Natural killer cell (primary cell): ENCODE measurements at regions of chr1 and their contacts with region 1.

Region 1: DNA sequence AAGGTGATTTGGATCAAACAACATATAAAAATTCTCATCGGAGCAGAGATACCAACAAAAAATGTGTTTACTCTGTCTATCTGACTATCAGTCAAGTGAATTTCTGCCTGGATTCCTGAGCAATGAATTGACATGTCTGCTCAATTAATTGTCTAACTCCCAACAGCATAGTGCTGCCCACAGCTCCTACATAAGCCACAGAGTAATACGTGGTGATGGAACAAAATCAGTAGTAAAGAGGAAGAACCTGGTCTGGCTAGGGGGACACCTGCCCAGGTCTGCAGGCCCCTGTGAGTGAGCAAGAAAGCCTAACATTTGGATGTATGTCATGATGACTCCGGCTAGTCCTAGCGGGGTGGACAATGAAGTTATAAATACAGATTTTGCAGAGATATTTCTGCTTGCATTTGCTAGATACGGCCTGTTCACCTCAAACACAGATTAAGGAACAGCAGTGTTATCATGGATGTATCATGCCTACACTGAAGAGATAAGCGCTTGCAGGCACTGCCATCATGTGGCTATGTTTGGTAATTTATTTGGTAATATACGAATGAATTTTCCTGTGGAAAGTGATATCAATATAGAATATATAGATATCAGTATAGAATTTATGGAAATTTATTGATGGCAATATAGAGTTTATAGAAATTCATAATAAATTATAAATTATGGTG is 69.6 kb upstream of the LRRC8B start:
- DNase-seq: peak; percentile 33 to 81
- ATAC-seq: peak; percentile 85 to 93 (median 92)
- H3K4me3 ChIP-seq: no peak overlapping the region
- H3K4me3 Mint-ChIP-seq: no peak overlapping the region
- H3K27ac ChIP-seq: no peak overlapping the region
- H3K27ac Mint-ChIP-seq: no peak overlapping the region
- H3K4me1 ChIP-seq: no peaks in the 10 kb centered on the region
- H3K4me1 Mint-ChIP-seq: peaks cover 0 to 4% of the 10 kb centered on the region in 2 donors
- H3K27me3 ChIP-seq: peaks cover 9% of the 10 kb centered on the region
- H3K27me3 Mint-ChIP-seq: peaks cover 30 to 44% of the 10 kb centered on the region in 2 donors
- CTCF ChIP-seq: peak; percentile 80

Region 2: GRCh38 chr1:88935522-88936222 is 519.3 kb before region 1 on chr1:
- intact Hi-C with region 1: loop called (anchors 1 kb)
- DNase-seq: peak in 1 of 2 donors; percentile 71
- ATAC-seq: peak in 2 of 3 donors; percentile 69 to 70
- H3K4me3 ChIP-seq: no peak overlapping the region
- H3K4me3 Mint-ChIP-seq: no peak overlapping the region
- H3K27ac ChIP-seq: no peak overlapping the region
- H3K27ac Mint-ChIP-seq: no peak overlapping the region
- H3K4me1 ChIP-seq: no peaks in the 10 kb centered on the region
- H3K4me1 Mint-ChIP-seq: no peaks in the 10 kb centered on the region
- H3K27me3 ChIP-seq: no peaks in the 10 kb centered on the region
- H3K27me3 Mint-ChIP-seq: no peaks in the 10 kb centered on the region
- CTCF ChIP-seq: peak; percentile 75

Region 3: GRCh38 chr1:88973520-88974137 is 481.4 kb before region 1 on chr1:
- intact Hi-C with region 1: loop called (anchors 1 kb)
- DNase-seq: peak in 1 of 2 donors; percentile 67
- ATAC-seq: peak in 2 of 3 donors; percentile 48 to 50
- H3K4me3 ChIP-seq: no peak overlapping the region
- H3K4me3 Mint-ChIP-seq: peak overlapping the region; percentile 75
- H3K27ac ChIP-seq: no peak overlapping the region
- H3K27ac Mint-ChIP-seq: peak overlapping the region; percentile 44 to 70
- H3K4me1 ChIP-seq: no peaks in the 10 kb centered on the region
- H3K4me1 Mint-ChIP-seq: peaks cover 26 to 38% of the 10 kb centered on the region in 2 donors
- H3K27me3 ChIP-seq: no peaks in the 10 kb centered on the region
- H3K27me3 Mint-ChIP-seq: no peaks in the 10 kb centered on the region
- CTCF ChIP-seq: peak; percentile 70

Region 4: DNA sequence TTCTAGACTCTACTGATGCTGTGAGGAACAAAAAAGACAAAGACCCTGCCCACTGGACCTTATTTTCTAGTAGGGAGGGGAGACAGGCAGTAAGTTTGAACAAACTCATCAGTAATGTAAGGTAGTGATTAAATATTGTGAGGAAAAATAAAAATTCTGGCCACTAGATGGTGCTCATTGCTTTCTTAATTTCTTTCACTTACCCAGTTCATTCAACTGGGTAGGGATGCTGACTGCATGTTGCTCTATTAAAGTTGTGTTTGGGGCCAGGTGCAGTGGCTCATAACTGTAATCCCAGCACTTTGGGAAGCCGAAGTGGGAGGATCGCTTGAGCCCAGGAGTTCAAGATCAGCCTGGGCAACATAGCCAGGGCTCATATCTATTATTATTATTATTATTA is 456.3 kb before region 1 on chr1:
- intact Hi-C with region 1: loop called (anchors 1 kb)
- DNase-seq: peak in 1 of 2 donors; percentile 87
- ATAC-seq: peak; percentile 81 to 90 (median 89)
- H3K4me3 ChIP-seq: no peak overlapping the region
- H3K4me3 Mint-ChIP-seq: no peak overlapping the region
- H3K27ac ChIP-seq: no peak overlapping the region
- H3K27ac Mint-ChIP-seq: no peak overlapping the region
- H3K4me1 ChIP-seq: peaks cover 1% of the 10 kb centered on the region
- H3K4me1 Mint-ChIP-seq: peaks cover 18 to 19% of the 10 kb centered on the region in 2 donors
- H3K27me3 ChIP-seq: no peaks in the 10 kb centered on the region
- H3K27me3 Mint-ChIP-seq: no peaks in the 10 kb centered on the region
- CTCF ChIP-seq: peak; percentile 69

Region 5: GRCh38 chr1:89085781-89086180 is 369.2 kb before region 1 on chr1:
- intact Hi-C with region 1: loop called (anchors 1 kb)
- DNase-seq: peak in 1 of 2 donors; percentile 77
- ATAC-seq: peak in 2 of 3 donors; percentile 72 to 79
- H3K4me3 ChIP-seq: no peak overlapping the region
- H3K4me3 Mint-ChIP-seq: no peak overlapping the region
- H3K27ac ChIP-seq: no peak overlapping the region
- H3K27ac Mint-ChIP-seq: no peak overlapping the region
- H3K4me1 ChIP-seq: no peaks in the 10 kb centered on the region
- H3K4me1 Mint-ChIP-seq: no peaks in the 10 kb centered on the region
- H3K27me3 ChIP-seq: no peaks in the 10 kb centered on the region
- H3K27me3 Mint-ChIP-seq: peaks cover 0 to 3% of the 10 kb centered on the region in 2 donors
- CTCF ChIP-seq: peak; percentile 69

Region 6: GRCh38 chr1:89974701-89975470 is 519.9 kb after region 1 on chr1:
- intact Hi-C with region 1: no loop called
- DNase-seq: no peak
- ATAC-seq: no peak
- H3K4me3 ChIP-seq: no peak overlapping the region
- H3K4me3 Mint-ChIP-seq: no peak overlapping the region
- H3K27ac ChIP-seq: no peak overlapping the region
- H3K27ac Mint-ChIP-seq: no peak overlapping the region
- H3K4me1 ChIP-seq: no peaks in the 10 kb centered on the region
- H3K4me1 Mint-ChIP-seq: no peaks in the 10 kb centered on the region
- H3K27me3 ChIP-seq: no peaks in the 10 kb centered on the region
- H3K27me3 Mint-ChIP-seq: peaks cover 0 to 3% of the 10 kb centered on the region in 2 donors
- CTCF ChIP-seq: no peak